Activated T-helper 1 cell treated with anti-CD3 and anti-CD28 coated beads, Interleukin-12 subunit alpha, Interleukin-12 subunit beta, Interleukin-2, Interleukin-4 antibody, amounts not matched to agents 30 ng/mL and 10 ng/mL and 1 ng/mL, durations not matched to agents 14 hours and 24 hours and 36 hours (primary cell): ENCODE measurements at regions of chr5 and their contacts with region 1.

Region 1: DNA sequence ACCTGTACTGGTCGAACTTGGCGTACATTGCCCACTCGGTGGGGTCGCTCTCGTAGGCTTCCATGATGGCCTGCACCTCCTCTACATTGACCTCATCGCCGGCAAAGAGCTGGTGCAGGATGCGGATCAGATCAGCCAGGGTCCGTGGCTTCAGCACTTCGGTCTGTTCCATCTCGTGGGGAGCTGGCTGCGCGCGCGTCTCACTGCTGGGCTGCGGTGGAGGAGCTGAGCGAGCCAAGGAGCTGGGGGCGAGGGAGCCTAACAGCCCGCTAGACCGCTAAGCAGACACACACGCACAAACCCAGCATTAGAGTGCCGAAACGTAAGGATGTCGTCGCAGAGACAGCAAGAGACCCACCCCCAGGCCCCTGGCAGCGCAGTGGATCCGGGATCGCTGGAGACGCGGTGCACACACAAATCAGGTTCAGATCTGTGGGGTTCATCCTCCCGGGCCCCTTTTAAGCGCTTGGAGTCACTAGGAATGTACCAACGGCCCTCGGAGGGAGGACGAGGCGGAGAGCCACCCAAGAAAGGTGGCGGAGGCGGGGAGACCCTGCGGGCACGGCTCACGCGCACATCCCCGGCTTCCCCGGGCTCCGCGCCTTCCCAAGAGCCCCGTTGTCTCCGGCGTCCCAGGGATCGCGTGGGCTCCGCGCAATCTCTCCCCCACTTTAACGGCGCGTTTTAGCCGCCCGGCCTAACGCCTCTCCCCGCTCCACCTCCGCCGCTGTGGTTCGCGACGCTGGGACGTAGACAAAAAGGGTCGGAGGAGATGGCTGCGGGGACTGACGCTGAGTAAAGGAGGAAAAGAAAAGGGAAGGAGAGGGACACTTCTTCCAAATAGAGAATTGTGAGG is at the start of gene CDO1:
- DNase-seq: no peak
- H3K4me3 Mint-ChIP-seq: peak within 1 kb of the TSS; percentile 74
- H3K27ac Mint-ChIP-seq: no peak within 1 kb of the TSS
- H3K4me1 Mint-ChIP-seq: peaks cover 30% of the 10 kb centered on the region
- H3K27me3 Mint-ChIP-seq: peaks cover 74% of the 10 kb centered on the region
- total RNA-seq, gene CDO1: 0.49 and 0.66 TPM in 2 replicates

Region 2: DNA sequence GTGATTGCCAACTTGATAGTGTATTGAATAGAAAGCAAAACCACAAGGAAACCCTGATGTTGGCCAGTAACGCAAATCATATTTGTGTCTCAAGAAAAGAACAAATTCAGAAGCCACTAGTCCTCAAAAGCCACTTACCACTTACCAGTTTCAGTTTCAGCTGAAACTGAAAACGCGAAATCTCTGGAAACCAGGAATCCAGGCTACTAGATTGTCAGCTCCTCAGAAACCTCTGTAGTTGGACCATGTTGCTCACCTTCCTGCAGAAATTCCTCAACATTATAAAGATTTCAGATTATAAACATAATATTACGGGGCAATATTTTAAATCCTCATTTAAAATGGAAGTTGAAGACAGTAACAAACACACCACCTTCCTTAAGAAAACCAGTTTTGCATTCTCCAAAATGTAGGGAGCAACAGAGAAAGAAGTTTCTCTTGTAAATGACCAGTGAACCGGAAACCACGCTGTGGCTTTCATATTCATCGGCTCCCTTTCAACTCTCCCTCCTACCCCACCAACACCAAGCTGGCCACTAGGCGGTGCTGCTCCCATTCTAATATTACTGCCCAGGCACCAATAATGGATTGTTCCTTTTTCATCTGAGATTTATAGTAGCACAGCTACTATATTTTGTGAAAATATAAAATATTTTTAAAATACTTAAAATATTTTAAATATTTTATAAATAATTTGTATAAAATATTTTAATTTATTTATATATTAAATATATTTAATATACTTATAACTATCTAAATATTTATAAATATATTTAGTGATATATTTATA is 181.9 kb before region 1 on chr5:
- intact Hi-C with region 1: loop called (anchors 2 kb)
- DNase-seq: peak; percentile 67
- H3K4me3 Mint-ChIP-seq: peak overlapping the region; percentile 24
- H3K27ac Mint-ChIP-seq: no peak overlapping the region
- H3K4me1 Mint-ChIP-seq: peaks cover 48% of the 10 kb centered on the region
- H3K27me3 Mint-ChIP-seq: peaks cover 63% of the 10 kb centered on the region

Region 3: DNA sequence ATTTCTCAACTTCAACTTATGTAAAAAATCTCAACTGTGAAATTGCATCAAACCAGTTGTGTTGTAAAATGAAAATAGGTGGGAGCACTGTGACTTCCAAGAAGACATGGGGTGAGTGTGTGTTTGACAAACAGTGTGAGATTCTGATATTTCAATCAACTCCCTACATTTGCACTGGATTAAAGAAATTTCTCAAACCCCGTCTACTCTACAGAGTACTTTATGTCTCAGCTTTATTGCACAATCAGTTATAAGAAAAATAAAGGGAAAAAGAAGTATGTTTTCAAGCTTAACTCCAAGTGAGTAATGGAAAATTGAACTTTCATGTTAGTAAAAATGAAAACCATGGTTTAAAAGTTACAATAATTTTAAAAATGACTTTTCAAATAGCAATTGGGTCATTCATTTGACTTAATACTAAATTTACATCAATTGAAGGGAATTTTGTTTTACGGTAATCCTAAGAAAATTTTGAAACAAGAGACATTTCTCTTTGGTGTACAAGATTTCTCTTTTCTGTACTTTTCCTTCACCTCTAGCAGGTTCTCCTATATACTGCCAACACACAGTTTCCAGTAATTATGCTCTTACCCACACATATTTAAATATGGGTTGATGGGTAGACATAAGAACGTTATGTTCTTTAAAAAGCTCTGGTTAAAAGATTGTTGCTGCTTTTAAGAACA is 80.3 kb before region 1 on chr5:
- intact Hi-C with region 1: loop called (anchors 2 kb)
- DNase-seq: no peak
- H3K4me3 Mint-ChIP-seq: no peak overlapping the region
- H3K27ac Mint-ChIP-seq: peak overlapping the region; percentile 56
- H3K4me1 Mint-ChIP-seq: peaks cover 25% of the 10 kb centered on the region
- H3K27me3 Mint-ChIP-seq: peaks cover 14% of the 10 kb centered on the region

Region 4: DNA sequence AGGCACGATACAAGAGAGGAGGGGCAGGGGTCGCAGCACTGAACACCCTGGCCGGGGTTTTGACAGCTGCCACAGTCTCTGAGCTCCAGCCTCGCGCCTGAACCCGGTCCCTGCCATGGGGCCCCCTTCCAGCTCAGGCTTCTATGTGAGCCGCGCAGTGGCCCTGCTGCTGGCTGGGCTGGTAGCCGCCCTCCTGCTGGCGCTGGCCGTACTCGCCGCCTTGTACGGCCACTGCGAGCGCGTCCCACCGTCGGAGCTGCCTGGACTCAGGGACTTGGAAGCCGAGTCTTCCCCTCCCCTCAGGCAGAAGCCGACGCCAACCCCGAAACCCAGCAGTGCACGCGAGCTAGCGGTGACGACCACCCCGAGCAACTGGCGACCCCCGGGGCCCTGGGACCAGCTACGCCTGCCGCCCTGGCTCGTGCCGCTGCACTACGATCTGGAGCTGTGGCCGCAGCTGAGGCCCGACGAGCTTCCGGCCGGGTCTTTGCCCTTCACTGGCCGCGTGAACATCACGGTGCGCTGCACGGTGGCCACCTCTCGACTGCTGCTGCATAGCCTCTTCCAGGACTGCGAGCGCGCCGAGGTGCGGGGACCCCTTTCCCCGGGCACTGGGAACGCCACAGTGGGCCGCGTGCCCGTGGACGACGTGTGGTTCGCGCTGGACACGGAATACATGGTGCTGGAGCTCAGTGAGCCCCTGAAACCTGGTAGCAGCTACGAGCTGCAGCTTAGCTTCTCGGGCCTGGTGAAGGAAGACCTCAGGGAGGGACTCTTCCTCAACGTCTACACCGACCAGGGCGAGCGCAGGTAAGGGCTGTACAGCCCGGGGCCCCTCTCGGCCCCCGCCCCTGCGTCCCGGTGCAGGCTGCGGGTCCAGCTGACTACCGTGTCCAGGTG is 146.3 kb after region 1 on chr5:
- intact Hi-C with region 1: loop called (anchors 1 kb)
- DNase-seq: no peak
- H3K4me3 Mint-ChIP-seq: no peak overlapping the region
- H3K27ac Mint-ChIP-seq: no peak overlapping the region
- H3K4me1 Mint-ChIP-seq: no peaks in the 10 kb centered on the region
- H3K27me3 Mint-ChIP-seq: peaks cover 55% of the 10 kb centered on the region

Region 5: GRCh38 chr5:116574367-116575325 is 758.2 kb after region 1 on chr5 and contains the start of gene SEMA6A:
- intact Hi-C with region 1: loop called (anchors 5 kb)
- DNase-seq: peak; percentile 59
- H3K4me3 Mint-ChIP-seq: peak within 1 kb of the TSS; percentile 81
- H3K27ac Mint-ChIP-seq: peak within 1 kb of the TSS; percentile 76
- H3K4me1 Mint-ChIP-seq: peaks cover 26% of the 10 kb centered on the region
- H3K27me3 Mint-ChIP-seq: peaks cover 78% of the 10 kb centered on the region
- total RNA-seq, gene SEMA6A: 0.23 and 0.39 TPM in 2 replicates